ENCODE measurements at regions of chr9 and their contacts with region 1.

Region 1: GRCh38 chr9:20356403-20357035 is 265.8 kb downstream of the MLLT3 start:
- DNase-seq: peak; percentile 75
- ATAC-seq: peak; percentile 89
- H3K4me3 ChIP-seq: peak overlapping the region; percentile 43; the same call in 1 of the 2 replicates
- H3K27ac ChIP-seq: no peak overlapping the region
- H3K4me1 ChIP-seq: peaks cover 21% of the 10 kb centered on the region
- H3K27me3 ChIP-seq: no peaks in the 10 kb centered on the region
- CTCF ChIP-seq: peak; percentile 82

Region 2: GRCh38 chr9:20407012-20407411 is 50.5 kb after region 1 on chr9:
- CTCF ChIA-PET with region 1: no interaction called
- POLR2A ChIA-PET with region 1: no interaction called
- intact Hi-C with region 1: loop called (anchors 1 kb)
- DNase-seq: no peak
- ATAC-seq: no peak
- H3K4me3 ChIP-seq: no peak overlapping the region
- H3K27ac ChIP-seq: no peak overlapping the region
- H3K4me1 ChIP-seq: no peaks in the 10 kb centered on the region; the same call in 1 of the 2 replicates
- H3K27me3 ChIP-seq: no peaks in the 10 kb centered on the region
- CTCF ChIP-seq: peak; percentile 30; the same call in 1 of the 2 replicates

Region 3: DNA sequence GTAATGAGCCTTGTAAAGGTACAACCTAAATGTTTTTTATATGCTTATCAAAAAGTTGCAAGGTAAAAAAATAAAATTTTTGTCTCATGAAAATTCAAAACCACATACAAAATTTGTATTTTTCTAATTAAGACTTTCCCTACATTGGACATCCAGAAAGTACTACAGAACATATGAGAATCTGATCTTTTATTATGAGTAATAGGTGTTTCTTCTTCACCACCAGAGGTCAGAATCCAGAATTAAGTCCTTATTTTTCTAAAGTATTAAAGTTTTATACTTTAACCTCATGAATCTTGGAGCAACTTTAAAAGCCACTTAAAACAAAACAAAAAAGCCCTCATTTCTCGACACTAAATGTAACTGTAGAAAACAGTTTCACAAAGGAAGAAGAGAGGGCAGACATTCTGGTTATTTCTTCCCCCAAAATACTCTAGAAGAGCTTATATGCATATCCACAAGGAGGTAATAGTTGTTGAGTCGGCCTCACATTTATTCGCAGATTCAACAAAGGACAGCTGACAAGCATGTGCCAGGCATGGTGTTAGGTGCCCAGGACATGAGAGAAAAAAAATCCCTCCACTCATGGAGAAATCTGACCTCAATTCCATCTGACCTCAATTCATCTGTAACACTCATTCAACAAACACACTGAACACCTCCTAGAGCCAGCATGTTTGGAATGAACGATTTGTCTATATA is 196.5 kb after region 1 on chr9:
- CTCF ChIA-PET with region 1: no interaction called
- POLR2A ChIA-PET with region 1: no interaction called
- intact Hi-C with region 1: loop called (anchors 5 kb)
- DNase-seq: peak; percentile 35
- ATAC-seq: peak; percentile 43
- H3K4me3 ChIP-seq: no peak overlapping the region
- H3K27ac ChIP-seq: peak overlapping the region; percentile 85
- H3K4me1 ChIP-seq: peaks cover 42% of the 10 kb centered on the region
- H3K27me3 ChIP-seq: no peaks in the 10 kb centered on the region
- CTCF ChIP-seq: peak; percentile 53

Region 4: DNA sequence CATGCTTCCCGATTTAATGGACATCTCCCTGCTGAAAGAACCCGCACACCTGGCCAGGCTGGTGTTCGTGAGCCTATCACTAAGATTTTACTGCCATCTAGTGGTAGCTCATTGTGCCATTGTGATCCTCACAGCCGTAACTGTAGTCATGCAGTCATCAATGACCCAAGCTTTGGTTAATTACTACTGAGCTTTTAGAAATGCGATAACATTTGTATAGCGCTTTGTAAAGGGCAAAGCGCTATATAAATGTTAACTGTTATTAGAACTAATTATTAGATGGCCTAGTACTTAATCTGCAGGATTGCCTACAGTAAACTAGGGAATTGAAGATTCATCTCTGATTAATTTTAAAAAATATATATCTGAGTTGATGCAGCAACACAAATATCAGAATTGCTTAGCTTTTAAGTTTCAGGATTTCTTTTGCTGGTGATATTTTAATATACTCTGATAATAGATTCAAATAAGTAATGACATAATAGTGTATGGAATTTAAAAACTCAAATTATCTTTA is 584.7 kb after region 1 on chr9:
- CTCF ChIA-PET with region 1: interaction called, 3 read pairs
- POLR2A ChIA-PET with region 1: no interaction called
- intact Hi-C with region 1: loop called (anchors 5 kb)
- DNase-seq: peak; percentile 79
- ATAC-seq: peak; percentile 98
- H3K4me3 ChIP-seq: no peak overlapping the region
- H3K27ac ChIP-seq: no peak overlapping the region
- H3K4me1 ChIP-seq: no peaks in the 10 kb centered on the region
- H3K27me3 ChIP-seq: no peaks in the 10 kb centered on the region
- CTCF ChIP-seq: peak; percentile 82

Measured in PC-3 (cell line).